ENCODE measurements at regions of chr14 and their contacts with region 1.

Region 1: GRCh38 chr14:89416002-89416995 is 734 bp downstream of the FOXN3 start:
- DNase-seq: peak; percentile 98
- ATAC-seq: peak; percentile 80
- H3K4me3 Mint-ChIP-seq: peak overlapping the region; percentile 84
- H3K27ac Mint-ChIP-seq: peak overlapping the region; percentile 85
- H3K4me1 Mint-ChIP-seq: peaks cover 51% of the 10 kb centered on the region
- H3K27me3 Mint-ChIP-seq: no peaks in the 10 kb centered on the region

Region 2: DNA sequence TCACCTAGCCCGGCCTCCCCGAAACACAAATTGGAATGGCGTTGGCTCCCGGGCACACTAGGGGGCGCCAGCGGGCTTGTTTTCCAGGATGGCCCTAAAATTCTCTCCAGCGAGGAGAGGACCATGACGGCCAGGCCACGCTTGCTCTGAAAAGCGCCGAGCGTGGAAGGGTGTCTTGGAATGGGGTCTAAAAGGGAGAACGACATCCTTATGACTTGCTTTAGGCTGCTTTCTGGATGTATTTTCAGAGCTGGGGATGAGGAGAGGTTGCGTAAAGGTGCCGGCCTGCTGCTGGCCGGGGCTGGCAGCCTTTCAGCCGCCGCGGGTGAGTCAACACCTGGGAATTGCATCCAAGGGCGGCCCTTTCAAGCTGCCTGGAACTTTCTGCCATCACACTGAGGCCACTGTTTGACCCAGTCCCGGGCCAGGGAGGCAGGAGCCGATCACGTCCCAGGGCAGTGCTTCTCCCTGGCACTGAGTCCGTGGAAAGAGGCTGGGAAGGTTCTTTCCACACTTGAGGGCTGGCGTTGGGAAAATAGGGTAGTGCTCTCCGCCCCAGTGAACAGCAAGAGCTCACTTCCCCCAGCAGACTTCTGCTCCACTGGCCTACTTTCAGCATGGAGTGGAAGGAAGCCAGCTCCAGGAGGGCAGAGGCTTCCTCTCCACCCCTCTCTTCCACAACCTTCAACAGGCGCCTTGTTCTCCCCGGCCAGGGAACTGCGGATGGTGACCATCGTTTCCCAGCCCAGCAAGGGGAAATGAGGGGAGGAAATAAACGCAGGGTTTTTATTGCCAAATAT is 375.6 kb before region 1 on chr14:
- CTCF ChIA-PET with region 1: no interaction called
- POLR2A ChIA-PET with region 1: no interaction called
- intact Hi-C with region 1: loop called (anchors 2 to 5 kb)
- DNase-seq: peak; percentile 91
- ATAC-seq: peak; percentile 83
- H3K4me3 Mint-ChIP-seq: peak overlapping the region; percentile 59
- H3K27ac Mint-ChIP-seq: peak overlapping the region; percentile 81
- H3K4me1 Mint-ChIP-seq: peaks cover 11% of the 10 kb centered on the region
- H3K27me3 Mint-ChIP-seq: peaks cover 20% of the 10 kb centered on the region

Region 3: GRCh38 chr14:89067293-89067972 is 348.9 kb before region 1 on chr14:
- CTCF ChIA-PET with region 1: no interaction called
- POLR2A ChIA-PET with region 1: no interaction called
- intact Hi-C with region 1: no loop called
- DNase-seq: peak; percentile 9
- ATAC-seq: peak; percentile 95
- H3K4me3 Mint-ChIP-seq: no peak overlapping the region
- H3K27ac Mint-ChIP-seq: no peak overlapping the region
- H3K4me1 Mint-ChIP-seq: peaks cover 15% of the 10 kb centered on the region
- H3K27me3 Mint-ChIP-seq: peaks cover 21% of the 10 kb centered on the region

Region 4: GRCh38 chr14:89293314-89293916 is 122.9 kb before region 1 on chr14:
- CTCF ChIA-PET with region 1: no interaction called
- POLR2A ChIA-PET with region 1: no interaction called
- intact Hi-C with region 1: no loop called
- DNase-seq: no peak
- ATAC-seq: no peak
- H3K4me3 Mint-ChIP-seq: no peak overlapping the region
- H3K27ac Mint-ChIP-seq: no peak overlapping the region
- H3K4me1 Mint-ChIP-seq: peaks cover 35% of the 10 kb centered on the region
- H3K27me3 Mint-ChIP-seq: no peaks in the 10 kb centered on the region

Region 5: DNA sequence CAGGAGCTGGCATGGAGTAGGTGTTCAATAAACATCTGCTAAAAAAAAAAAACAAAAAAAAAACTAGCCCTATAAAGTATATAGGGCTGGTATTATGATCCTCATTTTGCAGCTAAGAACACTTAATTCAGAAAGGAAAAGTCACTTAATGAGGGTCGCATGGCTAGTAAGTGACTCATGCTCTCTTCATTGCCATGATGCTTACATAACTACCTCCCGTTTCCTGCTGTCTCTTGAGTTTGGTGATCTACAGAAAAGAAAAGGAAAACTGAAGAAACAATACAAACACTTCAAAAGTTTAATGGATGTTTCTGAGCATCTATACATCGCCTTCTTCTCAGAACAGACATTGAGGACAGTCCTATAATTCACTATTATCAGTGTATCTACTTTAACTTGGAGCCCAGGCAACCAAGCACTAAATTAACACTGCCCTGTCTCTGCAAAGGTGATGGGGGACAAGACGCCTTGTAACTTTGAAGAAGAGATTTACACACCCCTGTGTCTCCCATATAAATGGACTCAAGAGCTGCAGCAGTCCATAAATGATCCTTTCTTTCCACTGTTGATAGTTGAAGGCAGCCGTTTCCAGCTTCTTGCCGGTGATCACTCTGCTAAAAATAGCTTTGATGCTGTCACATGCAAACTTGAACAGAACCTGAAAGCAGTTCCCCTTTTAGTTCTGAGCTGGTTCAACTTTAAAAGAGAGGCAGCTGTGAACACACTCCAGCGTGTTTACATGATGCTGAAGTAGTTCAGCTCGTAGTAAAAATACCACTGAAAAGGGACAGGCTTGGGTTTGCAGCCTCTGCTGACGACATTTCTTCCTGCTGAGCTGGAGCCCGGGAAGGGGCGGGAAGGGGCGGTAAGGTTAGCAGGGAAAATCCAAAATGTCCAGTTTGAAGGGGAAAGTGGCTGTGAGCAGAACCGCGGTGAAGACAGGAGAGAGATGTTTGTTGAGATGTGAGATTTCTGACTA is 112.6 kb before region 1 on chr14:
- CTCF ChIA-PET with region 1: no interaction called
- POLR2A ChIA-PET with region 1: no interaction called
- intact Hi-C with region 1: loop called in 1 of 2 experiments (anchors 1 kb)
- DNase-seq: peak; percentile 29
- ATAC-seq: peak; percentile 61
- H3K4me3 Mint-ChIP-seq: peak overlapping the region; percentile 62
- H3K27ac Mint-ChIP-seq: peak overlapping the region; percentile 91
- H3K4me1 Mint-ChIP-seq: peaks cover 62% of the 10 kb centered on the region
- H3K27me3 Mint-ChIP-seq: no peaks in the 10 kb centered on the region

Region 6: GRCh38 chr14:89509891-89510290 is 93.6 kb after region 1 on chr14:
- CTCF ChIA-PET with region 1: no interaction called
- POLR2A ChIA-PET with region 1: no interaction called
- intact Hi-C with region 1: loop called in 1 of 2 experiments (anchors 1 kb)
- DNase-seq: no peak
- ATAC-seq: no peak
- H3K4me3 Mint-ChIP-seq: peak overlapping the region; percentile 65
- H3K27ac Mint-ChIP-seq: peak overlapping the region; percentile 96
- H3K4me1 Mint-ChIP-seq: peaks cover 74% of the 10 kb centered on the region
- H3K27me3 Mint-ChIP-seq: no peaks in the 10 kb centered on the region

Region 7: DNA sequence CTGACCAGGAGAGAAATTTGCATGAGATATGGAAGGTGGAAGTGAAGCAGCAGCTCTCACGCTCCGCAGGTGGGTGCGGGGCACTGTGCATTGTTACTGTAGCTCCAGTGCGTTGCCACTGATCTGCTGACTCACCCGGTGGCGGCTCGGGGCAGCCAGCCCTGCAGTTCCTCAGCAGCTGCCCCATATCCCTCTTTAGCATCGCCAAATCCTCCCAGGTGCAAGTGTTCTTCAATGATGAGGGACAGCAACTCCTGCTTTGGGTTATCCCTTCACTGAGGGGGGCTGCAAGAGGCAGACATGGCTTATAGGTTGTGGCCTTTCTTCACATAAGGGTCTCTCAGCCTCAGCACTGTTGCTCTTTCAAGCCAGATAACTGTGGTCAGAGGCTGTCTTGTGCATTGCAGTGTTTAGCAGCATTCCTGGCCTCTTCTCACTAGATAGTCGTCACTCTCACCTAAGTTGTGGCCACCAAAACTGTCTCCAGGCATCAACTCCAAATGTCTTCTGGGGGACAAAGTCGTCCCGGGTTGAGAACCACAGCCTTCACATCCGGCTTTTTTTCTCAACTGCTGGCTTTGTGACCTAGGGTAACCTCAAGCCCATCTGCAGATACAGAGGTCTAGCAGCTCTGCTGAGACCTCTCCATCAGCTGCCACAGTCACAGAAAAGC is 357.5 kb after region 1 on chr14:
- CTCF ChIA-PET with region 1: no interaction called
- POLR2A ChIA-PET with region 1: no interaction called
- intact Hi-C with region 1: loop called in 1 of 2 experiments (anchors 5 kb)
- DNase-seq: peak; percentile 85
- ATAC-seq: peak; percentile 97
- H3K4me3 Mint-ChIP-seq: peak overlapping the region; percentile 37
- H3K27ac Mint-ChIP-seq: peak overlapping the region; percentile 76
- H3K4me1 Mint-ChIP-seq: peaks cover 21% of the 10 kb centered on the region
- H3K27me3 Mint-ChIP-seq: peaks cover 2% of the 10 kb centered on the region

Region 8: DNA sequence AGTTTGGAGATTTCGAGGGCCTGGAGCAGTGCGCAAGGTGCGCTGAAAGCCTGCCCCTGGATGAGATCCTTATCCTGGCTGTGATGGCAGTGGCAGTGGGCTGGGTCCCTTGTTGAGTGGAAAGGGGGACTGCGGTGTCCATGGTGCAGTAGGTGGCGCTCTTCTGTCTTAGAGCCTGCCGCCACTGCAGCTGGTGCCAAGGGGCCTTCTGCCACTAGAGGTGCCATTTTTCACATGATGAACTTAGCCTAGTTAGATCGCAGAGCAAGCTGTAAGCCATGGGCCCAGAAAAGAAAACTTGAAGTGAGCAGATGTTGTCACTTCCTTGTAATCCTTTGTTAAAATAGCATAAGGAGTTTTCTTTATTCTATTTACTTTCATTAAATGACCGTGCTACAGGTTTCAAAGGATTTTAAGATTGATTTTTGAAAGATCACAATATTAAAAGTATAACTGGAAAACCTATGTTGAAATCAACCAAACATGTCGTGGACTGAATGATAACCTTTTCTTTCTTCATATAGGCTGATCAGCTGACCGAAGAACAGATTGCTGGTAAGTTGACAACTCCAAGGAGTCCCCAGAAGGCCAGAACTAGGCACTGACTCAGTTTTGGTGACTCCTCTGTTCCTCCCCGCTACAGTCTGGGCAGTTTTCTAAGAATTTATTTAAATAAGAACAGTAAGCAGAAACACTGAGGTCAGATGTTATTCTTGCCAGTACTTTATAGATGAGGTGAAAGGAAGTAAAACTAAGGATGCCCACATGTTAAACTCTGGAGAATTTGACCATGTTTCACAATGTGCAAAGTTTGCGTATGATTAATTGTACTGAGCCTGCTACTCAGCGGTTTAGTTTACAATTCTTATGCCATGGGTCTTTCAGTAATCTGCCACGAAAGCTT is 983.5 kb after region 1 on chr14:
- CTCF ChIA-PET with region 1: no interaction called
- POLR2A ChIA-PET with region 1: no interaction called
- intact Hi-C with region 1: loop called in 1 of 2 experiments (anchors 5 kb)
- DNase-seq: peak; percentile 93
- ATAC-seq: peak; percentile 62
- H3K4me3 Mint-ChIP-seq: peak overlapping the region; percentile 97
- H3K27ac Mint-ChIP-seq: peak overlapping the region; percentile 95
- H3K4me1 Mint-ChIP-seq: peaks cover 53% of the 10 kb centered on the region
- H3K27me3 Mint-ChIP-seq: no peaks in the 10 kb centered on the region

Measured in activated CD4-positive, alpha-beta T cell treated with anti-CD3 and anti-CD28 coated beads for 36 hours (primary cell).